ENCODE measurements at regions of chr1 and their contacts with region 1.

Region 1: GRCh38 chr1:175154629-175155472 is 37.7 kb downstream of the KIAA0040 start:
- DNase-seq: peak; percentile 56
- ATAC-seq: peak; percentile 65
- H3K4me3 ChIP-seq: no peak overlapping the region
- H3K27ac ChIP-seq: no peak overlapping the region
- H3K4me1 ChIP-seq: peaks cover 0 to 15% of the 10 kb centered on the region in 2 experiments; a peak in 2 of 4 replicates
- H3K27me3 ChIP-seq: peaks cover 9% of the 10 kb centered on the region
- CTCF ChIP-seq: peak; percentile 83 to 95 (median 93)
- POLR2A ChIP-seq: no peak
- RAD21 ChIP-seq: peak; percentile 97

Region 2: GRCh38 chr1:174982971-174983689 is 171.7 kb before region 1 on chr1:
- CTCF ChIA-PET with region 1: no interaction called
- POLR2A ChIA-PET with region 1: no interaction called
- RAD21 ChIA-PET with region 1: no interaction called
- intact Hi-C with region 1: no loop called
- DNase-seq: peak; percentile 36
- ATAC-seq: no peak
- H3K4me3 ChIP-seq: no peak overlapping the region
- H3K27ac ChIP-seq: no peak overlapping the region
- H3K4me1 ChIP-seq: no peaks in the 10 kb centered on the region
- H3K27me3 ChIP-seq: no peaks in the 10 kb centered on the region
- CTCF ChIP-seq: peak; percentile 49 to 79 (median 59); a peak in 5 of 6 replicates
- POLR2A ChIP-seq: no peak
- RAD21 ChIP-seq: peak; percentile 65

Region 3: DNA sequence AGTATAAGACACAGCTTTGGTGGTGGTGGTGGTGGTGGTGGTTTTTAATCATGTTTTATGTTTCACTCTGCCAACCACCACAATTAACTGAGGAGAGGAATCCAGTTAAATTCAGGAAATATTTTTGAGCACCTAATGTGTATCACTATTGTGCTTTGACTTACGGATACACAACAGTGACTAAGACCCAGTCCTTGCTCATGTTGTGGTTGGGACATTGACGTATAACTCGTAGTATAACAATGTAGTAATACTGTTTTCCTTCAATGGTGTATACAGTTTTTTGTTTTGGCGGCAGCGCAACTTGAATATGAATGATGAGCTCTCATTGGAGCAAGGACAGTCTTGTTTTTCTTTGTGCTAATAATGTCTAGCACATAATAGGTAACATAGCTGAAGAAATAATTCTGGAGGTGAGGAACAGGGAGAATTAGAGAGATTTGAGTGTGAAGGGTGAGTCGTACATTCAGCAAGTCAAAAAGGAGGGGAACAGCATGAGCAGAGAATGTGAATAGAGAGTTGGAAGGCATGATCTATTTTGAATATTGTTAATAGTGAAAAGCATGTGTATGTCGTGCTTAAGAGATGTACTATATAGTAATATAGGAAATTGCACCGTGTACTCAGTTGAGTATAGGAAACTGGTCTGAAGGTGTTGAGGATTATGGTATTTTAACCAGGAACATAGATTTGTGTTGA is 149.6 kb before region 1 on chr1:
- CTCF ChIA-PET with region 1: no interaction called
- POLR2A ChIA-PET with region 1: no interaction called
- RAD21 ChIA-PET with region 1: no interaction called
- intact Hi-C with region 1: no loop called
- DNase-seq: no peak
- ATAC-seq: no peak
- H3K4me3 ChIP-seq: no peak overlapping the region
- H3K27ac ChIP-seq: no peak overlapping the region
- H3K4me1 ChIP-seq: peaks cover 5 to 15% of the 10 kb centered on the region in 2 experiments; a peak in 3 of 4 replicates
- H3K27me3 ChIP-seq: no peaks in the 10 kb centered on the region
- CTCF ChIP-seq: no peak
- POLR2A ChIP-seq: no peak
- RAD21 ChIP-seq: no peak

Region 4: GRCh38 chr1:175124861-175125260 is 30.0 kb before region 1 on chr1:
- CTCF ChIA-PET with region 1: interaction called, 13 read pairs
- POLR2A ChIA-PET with region 1: no interaction called
- RAD21 ChIA-PET with region 1: no interaction called
- intact Hi-C with region 1: no loop called
- DNase-seq: no peak
- ATAC-seq: no peak
- H3K4me3 ChIP-seq: no peak overlapping the region
- H3K27ac ChIP-seq: no peak overlapping the region
- H3K4me1 ChIP-seq: no peaks in the 10 kb centered on the region
- H3K27me3 ChIP-seq: no peaks in the 10 kb centered on the region
- CTCF ChIP-seq: no peak
- POLR2A ChIP-seq: no peak
- RAD21 ChIP-seq: no peak

Region 5: DNA sequence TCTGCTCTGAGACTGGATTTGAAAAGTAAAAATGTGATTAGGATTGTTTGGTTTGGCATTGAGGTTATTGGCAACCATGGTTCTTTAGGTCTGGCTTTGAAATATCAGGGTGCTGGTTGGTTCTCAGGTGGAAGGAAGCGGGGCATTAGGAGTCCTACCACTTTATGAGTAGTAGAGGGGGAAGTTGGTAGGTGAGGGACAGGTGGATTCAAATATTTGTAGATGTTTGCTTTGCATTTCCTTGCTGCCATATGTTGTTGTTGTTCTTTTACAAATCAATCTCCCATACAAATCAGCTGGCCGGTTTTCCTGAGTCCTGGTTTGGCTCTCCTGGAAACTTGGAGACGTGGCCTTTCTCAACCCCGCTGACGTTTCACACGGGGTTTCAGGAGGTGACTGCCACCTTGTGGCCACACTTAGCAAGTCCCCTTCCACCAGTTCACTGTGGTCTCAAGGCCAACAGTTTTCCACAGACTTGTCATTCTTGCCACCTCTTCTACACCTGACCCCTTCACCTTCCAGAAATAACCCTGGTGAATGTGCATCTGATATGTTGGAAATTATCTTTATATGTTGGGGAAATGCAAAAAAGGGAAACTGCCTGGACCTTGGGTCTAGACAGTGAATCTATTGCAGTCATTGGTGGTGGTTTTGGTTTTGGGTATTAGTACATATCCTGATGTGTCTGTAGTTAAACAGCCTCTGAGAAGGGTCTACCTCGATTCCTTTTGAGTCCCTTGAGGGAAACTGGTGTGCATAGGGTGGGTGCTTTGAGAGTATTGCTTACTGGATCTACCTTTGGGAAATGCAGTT is 164.8 kb after region 1 on chr1:
- CTCF ChIA-PET with region 1: interaction called, 140 read pairs
- POLR2A ChIA-PET with region 1: interaction called, 3 read pairs
- RAD21 ChIA-PET with region 1: interaction called, 12 to 15 read pairs
- intact Hi-C with region 1: loop called (anchors 1 kb)
- DNase-seq: peak; percentile 66
- ATAC-seq: peak; percentile 96
- H3K4me3 ChIP-seq: no peak overlapping the region
- H3K27ac ChIP-seq: no peak overlapping the region
- H3K4me1 ChIP-seq: peaks cover 0 to 12% of the 10 kb centered on the region in 2 experiments; a peak in 2 of 4 replicates
- H3K27me3 ChIP-seq: no peaks in the 10 kb centered on the region
- CTCF ChIP-seq: peak; percentile 86 to 90 (median 87)
- POLR2A ChIP-seq: no peak
- RAD21 ChIP-seq: peak; percentile 97

Region 6: DNA sequence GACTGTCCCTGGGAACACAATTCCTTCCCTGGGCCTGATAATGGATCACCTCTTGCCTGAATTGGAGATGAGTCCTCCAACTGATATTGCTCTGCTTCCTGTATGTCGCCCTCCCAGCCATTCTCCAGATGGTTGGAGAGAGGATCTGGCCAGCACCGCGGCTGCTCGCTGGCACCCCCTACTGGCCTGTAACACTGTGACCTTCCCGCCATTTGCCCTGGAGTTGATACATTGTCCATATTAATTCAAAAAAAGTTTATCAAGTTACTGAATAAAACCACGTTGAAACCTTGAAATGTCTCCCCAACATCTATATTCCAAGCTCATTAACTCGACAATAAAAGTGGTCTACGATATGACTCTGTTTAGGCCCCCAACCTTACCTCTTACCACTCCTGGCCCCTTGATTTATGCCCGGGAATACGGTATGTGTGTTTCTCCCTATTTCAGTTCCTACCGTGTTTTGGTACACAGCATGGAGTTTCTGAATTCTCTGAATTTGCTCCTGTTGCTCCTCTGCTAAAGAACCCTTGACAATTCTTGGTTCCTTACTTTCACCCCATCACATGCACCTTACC is 279.5 kb after region 1 on chr1:
- CTCF ChIA-PET with region 1: interaction called, 3 read pairs
- POLR2A ChIA-PET with region 1: no interaction called
- RAD21 ChIA-PET with region 1: no interaction called
- intact Hi-C with region 1: loop called (anchors 1 kb)
- DNase-seq: no peak
- ATAC-seq: peak; percentile 81
- H3K4me3 ChIP-seq: no peak overlapping the region
- H3K27ac ChIP-seq: no peak overlapping the region
- H3K4me1 ChIP-seq: no peaks in the 10 kb centered on the region
- H3K27me3 ChIP-seq: peaks cover 24% of the 10 kb centered on the region; the same call in 1 of the 2 replicates
- CTCF ChIP-seq: peak; percentile 35 to 83 (median 78); a peak in 5 of 6 replicates
- POLR2A ChIP-seq: no peak
- RAD21 ChIP-seq: peak; percentile 57

Region 7: DNA sequence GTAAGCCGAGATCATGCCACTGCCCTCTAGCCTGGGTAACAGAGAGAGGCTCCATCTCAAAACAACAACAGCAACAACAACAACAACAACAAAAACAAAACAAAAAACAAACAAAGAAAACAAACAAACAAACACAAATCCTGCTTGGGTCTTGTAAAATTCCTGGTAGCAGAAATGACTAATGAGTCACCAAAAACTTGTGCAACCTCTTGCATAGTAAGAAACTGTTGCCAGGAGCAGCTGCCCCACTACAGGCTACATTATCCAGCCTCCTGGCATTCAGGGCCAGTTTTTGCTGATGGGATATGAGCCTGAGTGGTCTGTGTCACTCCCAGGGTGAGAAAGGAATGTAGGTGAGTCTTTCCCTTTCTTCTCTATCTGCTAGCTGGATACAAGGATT is 343.2 kb after region 1 on chr1:
- CTCF ChIA-PET with region 1: no interaction called
- POLR2A ChIA-PET with region 1: no interaction called
- RAD21 ChIA-PET with region 1: no interaction called
- intact Hi-C with region 1: no loop called
- DNase-seq: no peak
- ATAC-seq: no peak
- H3K4me3 ChIP-seq: no peak overlapping the region
- H3K27ac ChIP-seq: no peak overlapping the region
- H3K4me1 ChIP-seq: no peaks in the 10 kb centered on the region
- H3K27me3 ChIP-seq: peaks cover 72% of the 10 kb centered on the region
- CTCF ChIP-seq: no peak
- POLR2A ChIP-seq: no peak
- RAD21 ChIP-seq: no peak

Region 8: DNA sequence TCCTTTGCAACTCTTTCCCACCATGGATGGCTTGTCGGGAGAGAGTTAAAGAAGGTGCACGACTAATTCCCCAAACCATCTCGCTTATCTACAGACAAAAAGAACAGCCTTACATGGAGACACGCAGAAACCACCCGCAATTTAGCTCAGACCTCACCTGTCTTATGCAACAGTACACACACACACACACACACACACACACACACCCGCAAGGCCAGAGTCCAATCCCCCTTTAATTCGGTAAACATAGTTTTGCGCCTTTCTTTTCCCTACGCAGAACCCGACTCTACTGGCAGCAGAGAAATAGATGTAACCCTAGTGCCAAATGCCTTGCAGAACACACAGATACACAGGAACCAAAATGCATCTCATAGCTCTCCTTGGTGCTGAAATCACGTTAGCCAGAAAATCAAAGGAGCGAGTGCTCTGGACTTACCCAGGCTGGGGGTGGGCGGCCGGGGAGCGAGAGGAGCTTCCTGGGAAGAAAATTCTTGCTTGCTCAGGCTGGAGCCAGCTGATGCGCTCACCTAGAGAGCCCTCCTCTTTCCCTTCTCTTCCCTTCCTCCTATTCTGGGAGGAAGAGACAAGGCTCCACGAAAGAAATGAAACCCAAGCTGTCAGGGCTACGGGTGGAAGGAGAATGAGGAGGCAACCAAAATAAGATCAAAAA is 588.1 kb after region 1 on chr1:
- CTCF ChIA-PET with region 1: interaction called, 5 read pairs
- POLR2A ChIA-PET with region 1: no interaction called
- RAD21 ChIA-PET with region 1: no interaction called
- intact Hi-C with region 1: loop called (anchors 5 kb)
- DNase-seq: no peak
- ATAC-seq: peak; percentile 38; the same call in 1 of the 2 replicates
- H3K4me3 ChIP-seq: no peak overlapping the region
- H3K27ac ChIP-seq: no peak overlapping the region
- H3K4me1 ChIP-seq: no peaks in the 10 kb centered on the region
- H3K27me3 ChIP-seq: peaks cover 27% of the 10 kb centered on the region; the same call in 1 of the 2 replicates
- CTCF ChIP-seq: no peak
- POLR2A ChIP-seq: no peak
- RAD21 ChIP-seq: no peak

Region 9: GRCh38 chr1:176691251-176692228 is 1536.7 kb after region 1 on chr1:
- CTCF ChIA-PET with region 1: no interaction called
- POLR2A ChIA-PET with region 1: no interaction called
- RAD21 ChIA-PET with region 1: no interaction called
- intact Hi-C with region 1: loop called (anchors 5 kb)
- DNase-seq: peak; percentile 47
- ATAC-seq: peak; percentile 82
- H3K4me3 ChIP-seq: no peak overlapping the region
- H3K27ac ChIP-seq: no peak overlapping the region
- H3K4me1 ChIP-seq: peaks cover 0 to 5% of the 10 kb centered on the region in 2 experiments; a peak in 1 of 4 replicates
- H3K27me3 ChIP-seq: peaks cover 30% of the 10 kb centered on the region
- CTCF ChIP-seq: peak; percentile 49 to 69 (median 68); a peak in 5 of 6 replicates
- POLR2A ChIP-seq: no peak
- RAD21 ChIP-seq: peak; percentile 63

Measured in HCT116 (cell line).